GM13977 (cell line): ENCODE measurements at regions of chr12 and their contacts with region 1.

Region 1: DNA sequence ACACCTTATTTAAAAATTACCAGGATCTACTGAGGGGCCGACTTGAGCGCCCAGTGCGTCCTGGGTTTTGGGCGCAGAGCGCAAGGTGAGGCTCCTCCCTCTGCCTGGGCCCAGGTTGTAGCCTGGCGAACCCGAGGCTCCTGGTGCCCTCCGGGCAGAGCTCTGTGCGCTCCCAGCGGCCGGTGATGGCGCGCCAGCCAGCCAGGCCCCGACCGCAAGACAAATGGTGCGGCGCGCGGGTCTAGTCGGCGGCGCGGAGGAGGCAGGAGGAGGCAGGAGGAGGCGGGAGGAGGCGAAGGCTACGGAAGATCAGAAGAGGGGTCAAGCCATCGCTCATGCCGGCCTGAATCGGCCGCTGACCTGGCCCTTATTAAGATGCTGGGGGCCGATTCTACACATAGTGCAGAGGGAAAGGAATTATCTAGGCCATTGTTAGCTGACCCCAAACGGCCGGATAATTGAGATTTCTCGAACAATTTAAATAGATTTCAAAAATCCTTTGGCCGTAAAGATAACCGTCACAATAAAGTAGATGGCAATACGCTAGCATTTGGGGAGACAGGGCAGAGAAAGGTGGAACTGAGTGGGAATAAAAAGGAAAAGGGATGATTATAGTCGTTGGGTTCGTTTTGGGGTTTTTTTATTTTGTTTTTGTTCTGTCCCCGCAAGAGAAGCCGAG is 2.8 kb downstream of the TBX5 start:
- DNase-seq: peak; percentile 12
- CTCF ChIP-seq: no peak

Region 2: GRCh38 chr12:113462117-113462774 is 940.9 kb before region 1 on chr12:
- in situ Hi-C with region 1: loop called (anchors 25 kb)
- DNase-seq: peak; percentile 82
- CTCF ChIP-seq: peak; percentile 93

Region 3: GRCh38 chr12:113622410-113622809 is 780.7 kb before region 1 on chr12:
- in situ Hi-C with region 1: no loop called
- DNase-seq: no peak
- CTCF ChIP-seq: no peak

Region 4: GRCh38 chr12:114263056-114263805 is 139.9 kb before region 1 on chr12:
- in situ Hi-C with region 1: no loop called
- DNase-seq: no peak
- CTCF ChIP-seq: no peak

Region 5: GRCh38 chr12:114794049-114794558 is 391.0 kb after region 1 on chr12:
- in situ Hi-C with region 1: no loop called
- DNase-seq: no peak
- CTCF ChIP-seq: no peak